Right ventricle myocardium superior (tissue), 1 donor: ENCODE measurements at regions of chr2 and their contacts with region 1.

Region 1: DNA sequence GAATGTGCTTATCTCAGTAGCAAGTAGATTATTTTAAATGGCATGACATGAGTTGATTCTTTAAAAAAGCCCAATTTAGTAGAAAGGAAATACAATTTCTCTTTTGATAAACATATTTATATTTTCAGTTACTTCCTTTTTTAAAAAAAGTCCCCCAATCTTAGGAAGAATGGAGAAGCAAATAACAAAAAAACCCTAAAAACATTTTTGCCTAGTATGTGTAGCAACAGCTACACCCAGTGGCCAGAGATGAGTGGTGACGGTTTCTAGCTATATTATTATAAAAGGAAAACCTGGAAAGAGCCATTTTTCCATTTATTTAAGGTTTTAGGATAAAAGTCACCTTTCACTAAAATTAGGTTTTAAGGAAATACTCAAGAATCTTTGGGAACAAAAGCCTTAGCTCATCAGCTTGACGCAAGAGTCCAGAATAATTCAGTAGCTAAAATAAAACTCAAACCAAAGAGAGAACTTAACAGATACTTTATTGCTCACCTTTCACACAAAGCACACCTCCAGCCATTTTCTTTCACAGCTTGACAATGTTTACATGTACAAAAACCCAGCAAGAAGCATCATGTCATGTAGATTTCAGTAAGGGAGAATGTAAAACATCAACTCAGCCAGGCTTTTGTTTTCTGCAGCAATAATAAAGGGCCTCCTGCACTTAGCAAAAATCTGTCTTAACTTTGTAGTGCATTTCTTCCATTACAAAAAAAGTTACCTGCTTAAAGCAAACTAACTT is 15.7 kb downstream of the FAM98A start:
- DNase-seq: no peak
- ATAC-seq: peak; percentile 67

Region 2: DNA sequence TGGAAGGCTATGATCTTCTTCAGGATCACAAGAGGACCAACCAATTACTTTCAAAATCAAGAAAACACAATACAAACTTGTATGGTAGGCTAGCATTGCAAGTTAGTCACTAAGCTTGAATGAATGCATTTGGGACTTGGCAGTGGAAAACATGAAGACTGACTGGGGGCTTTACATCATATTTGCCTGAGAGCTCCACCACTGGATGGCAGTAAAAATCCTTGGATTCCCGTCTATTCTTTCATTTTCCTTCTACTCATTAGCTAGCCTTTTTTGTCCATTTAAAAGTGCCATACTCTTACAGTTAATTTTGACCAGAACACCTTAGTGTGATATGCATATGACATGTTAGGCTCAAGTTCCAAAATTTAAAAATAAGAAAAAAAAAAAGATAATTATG is 170.4 kb before region 1 on chr2:
- intact Hi-C with region 1: loop called (anchors 5 kb)
- DNase-seq: no peak
- ATAC-seq: peak; percentile 73